ENCODE measurements at regions of chr22 and their contacts with region 1.

Region 1: GRCh38 chr22:31749636-31750364 is at the start of gene PRR14L:
- DNase-seq: peak; percentile 98 to 100 (median 99)

Region 2: GRCh38 chr22:31345331-31346254 is 404.2 kb before region 1 on chr22:
- intact Hi-C with region 1: loop called (anchors 10 kb)
- DNase-seq: peak; percentile 63 to 97 (median 79)

Region 3: GRCh38 chr22:31489604-31490495 is 259.9 kb before region 1 on chr22 and contains the start of gene EIF4ENIF1:
- intact Hi-C with region 1: loop called (anchors 5 kb)
- DNase-seq: peak; percentile 82 to 98 (median 86)

Region 4: DNA sequence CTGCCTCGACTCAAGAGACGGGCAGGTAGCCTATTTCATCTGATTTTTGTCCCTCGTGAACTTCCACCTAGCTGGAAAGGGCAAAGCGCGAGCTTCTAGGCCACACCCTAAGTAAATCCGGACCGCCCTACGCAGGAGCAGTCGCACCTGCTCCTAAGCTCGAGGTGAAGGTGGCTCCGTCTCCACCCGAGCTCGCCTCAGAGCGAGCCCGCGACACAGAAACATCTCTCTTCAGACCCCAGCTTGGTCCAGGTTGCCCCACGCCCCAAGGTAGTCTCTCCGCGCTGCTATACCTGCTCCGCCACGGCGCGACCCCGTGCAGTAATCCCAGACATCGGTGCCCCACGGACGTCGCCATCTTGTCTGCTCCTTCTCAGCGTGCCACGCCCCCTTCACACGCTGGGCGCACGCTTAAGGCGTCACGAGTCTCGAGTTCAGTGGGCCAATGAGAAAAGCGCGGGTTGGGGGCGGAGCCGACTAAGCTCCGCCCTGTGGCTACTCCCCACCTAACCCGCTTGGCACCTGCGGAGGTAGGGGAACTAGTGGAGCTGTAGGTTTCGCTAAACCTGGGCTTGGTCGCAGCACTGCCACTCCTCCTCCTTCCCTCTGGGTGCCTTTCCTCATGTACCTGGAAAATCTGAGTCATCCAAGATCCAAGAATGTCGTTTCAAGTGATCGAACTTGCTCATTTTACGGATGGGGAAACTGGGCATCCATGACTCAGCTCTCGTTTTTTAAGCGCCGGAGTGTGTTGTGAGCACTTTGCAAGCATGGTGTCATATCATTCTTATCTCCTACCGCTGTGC is 87.7 kb before region 1 on chr22 and contains the start of gene PISD:
- intact Hi-C with region 1: loop called (anchors 5 kb)
- DNase-seq: peak; percentile 86 to 99 (median 94)

Region 5: DNA sequence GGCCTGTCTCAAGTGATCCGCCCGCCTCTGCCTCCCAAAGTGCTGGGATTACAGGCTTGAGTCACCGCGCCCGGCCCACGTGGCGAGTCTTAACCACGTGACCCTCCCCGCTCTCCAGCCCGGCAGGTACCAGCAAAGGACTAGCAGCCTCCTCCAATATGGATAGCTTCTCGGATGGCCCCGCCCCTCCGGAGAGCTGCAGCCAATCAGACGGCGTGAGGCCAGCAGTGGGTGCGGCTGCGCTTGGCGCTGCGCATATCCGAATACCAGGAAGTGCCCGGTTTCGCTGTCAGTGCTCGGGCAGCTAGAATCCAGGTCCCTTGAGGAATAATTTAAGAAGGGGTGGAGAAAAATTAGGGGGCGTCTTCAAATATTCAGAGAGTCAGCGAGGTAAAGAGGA is 73.1 kb before region 1 on chr22:
- intact Hi-C with region 1: loop called (anchors 5 kb)
- DNase-seq: peak; percentile 81 to 99 (median 93)

Region 6: GRCh38 chr22:31764785-31765184 is 15.0 kb after region 1 on chr22:
- intact Hi-C with region 1: no loop called
- DNase-seq: no peak

Region 7: DNA sequence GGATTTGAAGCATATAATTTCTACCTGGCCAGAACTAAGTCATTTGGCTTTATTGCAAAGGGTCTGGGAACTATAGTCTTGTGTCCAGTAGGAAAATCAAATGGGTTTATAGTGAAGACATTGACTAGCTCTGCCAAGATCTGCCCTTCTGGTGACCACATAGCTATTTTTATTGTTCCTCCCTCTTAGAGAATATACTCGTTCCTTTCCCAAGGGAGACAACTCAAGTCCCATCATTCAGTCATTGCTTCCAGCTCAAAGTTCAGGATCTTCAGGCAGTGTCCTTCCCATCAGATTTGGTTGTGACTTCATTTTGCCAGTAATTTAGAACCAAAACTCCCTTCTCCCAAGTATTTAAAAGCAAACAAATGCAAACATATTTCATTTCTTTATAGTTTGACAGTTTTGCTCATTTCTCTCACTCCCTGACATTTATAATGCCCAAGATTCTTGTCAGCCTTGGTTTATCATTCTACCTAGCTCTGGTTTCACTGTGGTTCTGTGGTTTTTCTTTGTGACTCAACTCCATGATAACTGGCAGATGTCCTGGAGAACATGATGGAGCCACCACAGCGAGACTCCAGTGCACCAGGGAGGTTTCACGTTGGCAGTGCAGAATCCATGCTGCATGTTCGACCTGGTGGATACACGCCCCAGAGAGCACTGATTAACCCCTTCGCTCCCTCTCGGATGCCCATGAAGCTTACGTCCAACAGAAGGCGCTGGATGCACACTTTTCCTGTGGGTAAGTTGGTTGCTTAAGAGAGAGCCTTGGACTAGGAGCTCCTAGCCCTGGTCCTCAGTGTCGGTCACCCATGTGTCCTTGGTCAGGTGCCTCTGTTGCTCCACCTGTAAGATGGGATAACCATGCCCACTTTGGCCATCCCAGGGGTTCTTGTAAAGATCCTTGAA is 68.9 kb after region 1 on chr22:
- intact Hi-C with region 1: no loop called
- DNase-seq: peak in 1 of 10 donors; percentile 23

Region 8: GRCh38 chr22:31943976-31944699 is 194.3 kb after region 1 on chr22 and contains the start of gene YWHAH:
- intact Hi-C with region 1: loop called (anchors 5 kb)
- DNase-seq: peak; percentile 91 to 99 (median 94)